SK-N-SH (cell line): ENCODE measurements at regions of chr1 and their contacts with region 1.

Region 1: DNA sequence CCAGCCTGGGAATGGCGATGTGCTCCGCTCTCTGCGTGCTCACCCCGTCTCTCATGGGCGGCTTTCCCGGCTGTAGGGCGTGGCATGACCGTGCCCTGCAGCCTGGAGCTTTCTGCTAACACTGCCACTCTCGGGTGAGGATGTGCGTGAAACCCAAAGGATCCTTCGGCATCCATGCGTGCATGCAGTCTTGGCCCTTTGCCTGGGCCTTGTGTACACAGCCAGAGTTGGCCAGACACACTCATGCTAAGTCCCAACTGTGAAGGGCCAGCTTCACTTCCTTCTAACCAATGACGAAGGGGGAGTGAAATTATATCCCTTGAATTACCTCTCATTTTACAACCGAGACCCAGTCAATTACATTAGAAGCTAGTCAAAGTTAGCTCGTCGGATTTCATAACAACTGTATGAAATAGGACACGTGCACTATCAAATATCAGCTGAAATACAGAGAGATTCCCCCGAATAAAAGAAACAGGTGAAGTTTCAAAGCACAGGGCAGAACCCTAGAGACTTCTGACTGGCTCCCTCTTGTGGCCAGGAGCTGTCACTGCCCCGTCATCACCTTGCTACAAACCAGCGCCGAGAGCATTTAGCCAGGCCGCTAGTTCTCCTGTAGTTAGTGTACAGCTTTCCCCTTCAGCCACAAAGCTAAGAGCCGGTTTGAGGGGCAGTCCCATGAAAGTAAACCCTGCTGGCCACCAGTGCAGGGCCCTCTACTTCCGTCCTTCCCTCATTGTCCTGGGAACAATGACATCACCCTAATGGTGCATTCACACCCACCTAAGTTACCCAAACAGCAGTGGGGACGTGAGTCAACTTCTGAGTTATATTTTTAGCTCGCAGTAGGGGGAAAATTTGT is 63.4 kb upstream of the COA6 start:
- DNase-seq: peak; percentile 78
- H3K4me3 ChIP-seq: no peak overlapping the region; a peak in 1 of 4 replicates
- H3K27ac ChIP-seq: no peak overlapping the region; a peak in 1 of 4 replicates
- H3K4me1 ChIP-seq: peaks cover 0 to 13% of the 10 kb centered on the region in 2 experiments; a peak in 2 of 4 replicates
- H3K27me3 ChIP-seq: no peaks in the 10 kb centered on the region
- CTCF ChIP-seq: peak; percentile 98
- EP300 ChIP-seq: no peak
- RAD21 ChIP-seq: peak; percentile 81

Region 2: DNA sequence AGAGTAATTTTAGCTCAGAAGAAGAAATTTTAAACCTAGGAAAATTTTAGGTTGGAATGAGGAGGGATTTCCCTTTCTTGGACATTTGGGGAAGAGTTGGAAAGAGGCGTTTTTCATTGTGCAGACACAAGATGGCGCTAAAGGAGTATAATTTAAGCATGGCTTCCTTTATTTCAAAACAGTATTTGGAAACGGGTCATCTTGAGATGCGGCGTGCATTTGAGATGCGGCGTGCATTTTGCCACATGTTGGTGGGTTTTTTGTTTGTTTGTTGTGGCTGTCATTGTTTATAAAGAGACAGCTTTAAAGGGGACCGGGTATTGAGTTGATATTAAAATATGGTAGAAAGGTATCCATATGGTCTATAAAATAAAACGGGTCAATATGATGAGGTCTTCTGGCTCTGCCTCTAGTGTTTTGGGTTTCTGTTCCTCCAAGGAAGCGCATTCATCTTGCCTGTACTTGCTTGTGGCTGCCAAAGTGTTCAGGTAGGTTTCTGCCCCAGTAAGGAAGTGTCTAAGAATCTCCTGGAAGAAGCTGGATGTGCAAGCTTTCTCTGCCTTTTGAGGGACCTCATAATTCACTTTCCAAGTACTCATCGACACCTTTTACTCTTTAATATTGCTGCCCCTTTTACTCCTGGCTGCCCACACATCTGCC is 195.1 kb before region 1 on chr1:
- CTCF ChIA-PET with region 1: interaction called, 33 read pairs
- POLR2A ChIA-PET with region 1: no interaction called
- DNase-seq: peak; percentile 54
- H3K4me3 ChIP-seq: peak overlapping the region; percentile 7 to 44; a peak in 3 of 4 replicates
- H3K27ac ChIP-seq: no peak overlapping the region
- H3K4me1 ChIP-seq: peaks cover 0 to 5% of the 10 kb centered on the region in 2 experiments; a peak in 2 of 4 replicates
- H3K27me3 ChIP-seq: no peaks in the 10 kb centered on the region
- CTCF ChIP-seq: peak; percentile 84
- EP300 ChIP-seq: no peak
- RAD21 ChIP-seq: peak; percentile 87

Region 3: DNA sequence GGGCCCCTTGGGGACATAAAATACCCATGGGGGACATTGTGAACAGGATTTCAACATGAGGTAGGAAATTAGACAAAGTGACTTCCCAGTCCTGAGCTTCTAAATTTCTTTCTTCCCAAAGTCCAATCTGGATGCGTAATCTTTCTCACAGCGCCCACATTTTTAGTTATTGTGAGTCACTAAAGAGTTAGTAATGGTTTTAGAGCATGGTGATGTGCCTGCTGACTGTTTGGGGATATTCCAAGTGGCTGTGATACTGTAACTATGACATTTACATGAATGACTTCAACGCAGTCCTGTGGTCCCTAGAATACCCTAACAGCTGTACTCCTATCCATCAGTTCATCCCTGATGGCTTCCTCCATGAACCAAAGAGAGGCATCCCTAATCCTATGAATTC is 160.6 kb before region 1 on chr1:
- CTCF ChIA-PET with region 1: interaction called, 16 read pairs
- POLR2A ChIA-PET with region 1: no interaction called
- DNase-seq: no peak
- H3K4me3 ChIP-seq: no peak overlapping the region
- H3K27ac ChIP-seq: peak overlapping the region in 1 of 2 experiments; percentile 71; a peak in 2 of 4 replicates
- H3K4me1 ChIP-seq: peaks cover 0 to 5% of the 10 kb centered on the region in 2 experiments; a peak in 2 of 4 replicates
- H3K27me3 ChIP-seq: no peaks in the 10 kb centered on the region
- CTCF ChIP-seq: no peak
- EP300 ChIP-seq: no peak
- RAD21 ChIP-seq: no peak

Region 4: DNA sequence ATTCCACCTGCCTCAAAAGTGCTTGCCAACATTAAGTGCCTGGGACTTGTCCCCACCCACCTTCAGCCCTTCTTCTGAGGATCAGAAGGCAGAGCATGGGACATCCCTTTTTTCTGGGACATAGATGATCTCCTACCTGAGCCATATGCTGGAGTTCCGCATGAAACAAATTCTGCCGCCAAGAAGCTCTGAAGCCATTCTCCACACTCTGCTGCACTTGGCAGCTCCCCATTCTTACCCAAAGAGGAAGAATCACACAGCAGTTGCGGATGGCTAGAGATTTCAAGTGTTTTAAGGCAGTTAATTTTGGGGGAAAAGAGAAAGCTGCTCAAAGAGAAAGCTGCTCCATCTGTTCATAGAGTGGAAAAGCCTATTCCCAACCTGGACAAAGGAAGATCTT is 133.8 kb before region 1 on chr1:
- CTCF ChIA-PET with region 1: interaction called, 11 read pairs
- POLR2A ChIA-PET with region 1: no interaction called
- DNase-seq: no peak
- H3K4me3 ChIP-seq: no peak overlapping the region
- H3K27ac ChIP-seq: no peak overlapping the region
- H3K4me1 ChIP-seq: no peaks in the 10 kb centered on the region
- H3K27me3 ChIP-seq: peaks cover 5% of the 10 kb centered on the region; the same call in 1 of the 2 replicates
- CTCF ChIP-seq: no peak
- EP300 ChIP-seq: no peak
- RAD21 ChIP-seq: no peak

Region 5: DNA sequence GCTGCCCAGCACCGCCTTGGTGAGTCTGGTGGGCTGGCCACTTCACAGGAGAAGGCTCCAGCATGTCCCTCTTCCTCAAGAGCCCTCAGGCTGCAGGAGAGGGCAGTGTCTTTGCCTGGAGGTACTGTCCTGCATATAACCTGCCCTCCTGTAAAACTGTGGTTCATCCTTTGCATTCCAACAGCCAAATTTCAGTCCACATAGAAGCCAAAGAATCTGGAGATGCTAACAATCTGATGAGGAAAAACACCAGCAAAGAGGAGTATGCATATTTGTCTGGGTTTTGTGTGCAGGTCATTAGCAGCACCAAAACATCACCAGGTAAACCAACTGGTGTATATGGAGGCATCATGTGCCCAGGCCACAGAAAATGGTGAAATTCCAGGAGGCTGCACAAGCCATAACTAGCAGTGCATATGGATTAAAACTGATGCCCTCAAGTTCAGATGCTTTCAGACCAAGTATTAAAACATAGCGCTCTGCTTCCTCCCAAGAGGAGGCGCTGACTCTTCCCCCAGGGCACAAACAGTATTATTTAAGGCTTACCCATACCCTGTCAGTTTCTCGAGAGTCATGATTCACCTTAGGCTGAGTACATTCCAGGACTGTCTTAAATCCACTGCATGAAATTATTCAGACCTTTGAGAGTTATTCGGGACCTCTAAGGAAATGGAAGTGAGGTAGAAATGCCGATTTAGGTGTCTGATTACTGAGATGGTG is 87.1 kb before region 1 on chr1:
- CTCF ChIA-PET with region 1: interaction called, 190 read pairs
- POLR2A ChIA-PET with region 1: no interaction called
- DNase-seq: no peak
- H3K4me3 ChIP-seq: no peak overlapping the region
- H3K27ac ChIP-seq: no peak overlapping the region
- H3K4me1 ChIP-seq: no peaks in the 10 kb centered on the region
- H3K27me3 ChIP-seq: no peaks in the 10 kb centered on the region
- CTCF ChIP-seq: no peak
- EP300 ChIP-seq: no peak
- RAD21 ChIP-seq: no peak

Region 6: DNA sequence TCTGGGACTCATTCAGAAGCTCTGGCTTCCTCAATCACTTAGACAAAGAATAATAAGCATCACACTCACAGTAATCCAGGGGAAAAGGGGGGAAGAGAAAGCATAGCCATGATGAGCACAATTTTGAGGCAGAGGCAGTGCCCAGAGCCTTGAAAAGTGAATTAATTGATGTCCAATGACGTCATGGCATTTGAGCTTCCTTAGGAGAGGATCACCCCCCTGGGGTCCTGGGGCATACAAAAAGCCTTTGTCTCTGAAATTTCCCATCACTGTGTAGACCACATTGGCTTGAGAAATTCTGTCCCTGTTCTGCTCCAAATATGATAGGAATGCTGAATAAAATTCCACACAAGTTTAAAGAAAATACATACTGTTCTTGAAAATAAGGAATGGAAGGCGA is 20.9 kb before region 1 on chr1:
- CTCF ChIA-PET with region 1: interaction called, 64 read pairs
- POLR2A ChIA-PET with region 1: no interaction called
- DNase-seq: no peak
- H3K4me3 ChIP-seq: no peak overlapping the region
- H3K27ac ChIP-seq: no peak overlapping the region
- H3K4me1 ChIP-seq: no peaks in the 10 kb centered on the region
- H3K27me3 ChIP-seq: no peaks in the 10 kb centered on the region
- CTCF ChIP-seq: no peak
- EP300 ChIP-seq: no peak
- RAD21 ChIP-seq: no peak

Region 7: DNA sequence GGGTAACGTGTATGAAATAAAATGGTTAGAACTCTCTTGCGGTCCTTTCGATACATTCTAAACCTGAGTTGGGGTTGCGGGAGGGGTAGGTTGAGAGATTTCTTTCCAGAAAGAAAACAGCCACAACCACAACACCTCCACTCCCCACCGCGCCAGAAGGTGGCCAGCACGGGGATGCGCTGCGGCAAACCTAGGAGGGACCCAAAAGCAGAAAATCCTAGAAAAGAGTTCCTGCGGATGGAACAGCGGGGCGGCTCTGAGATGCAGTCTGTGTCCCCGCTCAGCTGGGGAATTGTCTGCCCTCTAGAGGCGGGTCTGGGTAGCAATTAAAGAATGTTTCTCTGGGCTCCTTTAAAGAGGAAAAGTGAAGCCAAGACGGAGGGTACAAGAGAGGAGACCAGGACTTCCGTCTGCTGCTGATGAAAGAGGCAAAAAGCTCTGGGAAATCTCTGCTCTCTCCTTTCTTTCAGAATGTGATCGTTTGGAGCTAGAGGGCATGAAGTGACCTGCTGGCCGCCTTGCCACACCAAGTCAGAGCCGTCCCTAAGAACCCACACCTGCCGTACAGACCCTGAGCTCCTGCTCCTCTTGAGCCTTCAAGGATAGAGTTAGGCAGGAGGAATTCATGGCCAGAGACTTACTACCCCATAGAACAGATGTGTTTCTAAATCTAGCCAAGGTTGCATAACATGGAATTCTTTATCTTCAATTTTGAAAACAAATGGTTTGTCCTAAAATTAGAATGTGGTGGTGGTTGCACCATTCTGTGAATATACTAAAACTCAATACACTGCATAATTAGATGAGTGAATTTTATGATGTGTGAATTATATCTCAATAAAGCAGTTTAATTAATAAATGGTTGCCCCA is 16.9 kb after region 1 on chr1:
- CTCF ChIA-PET with region 1: interaction called, 102 read pairs
- POLR2A ChIA-PET with region 1: no interaction called
- DNase-seq: peak; percentile 72
- H3K4me3 ChIP-seq: no peak overlapping the region; a peak in 1 of 4 replicates
- H3K27ac ChIP-seq: no peak overlapping the region
- H3K4me1 ChIP-seq: peaks cover 0 to 7% of the 10 kb centered on the region in 2 experiments; a peak in 1 of 4 replicates
- H3K27me3 ChIP-seq: no peaks in the 10 kb centered on the region
- CTCF ChIP-seq: peak; percentile 76
- EP300 ChIP-seq: no peak
- RAD21 ChIP-seq: peak; percentile 69

Region 8: DNA sequence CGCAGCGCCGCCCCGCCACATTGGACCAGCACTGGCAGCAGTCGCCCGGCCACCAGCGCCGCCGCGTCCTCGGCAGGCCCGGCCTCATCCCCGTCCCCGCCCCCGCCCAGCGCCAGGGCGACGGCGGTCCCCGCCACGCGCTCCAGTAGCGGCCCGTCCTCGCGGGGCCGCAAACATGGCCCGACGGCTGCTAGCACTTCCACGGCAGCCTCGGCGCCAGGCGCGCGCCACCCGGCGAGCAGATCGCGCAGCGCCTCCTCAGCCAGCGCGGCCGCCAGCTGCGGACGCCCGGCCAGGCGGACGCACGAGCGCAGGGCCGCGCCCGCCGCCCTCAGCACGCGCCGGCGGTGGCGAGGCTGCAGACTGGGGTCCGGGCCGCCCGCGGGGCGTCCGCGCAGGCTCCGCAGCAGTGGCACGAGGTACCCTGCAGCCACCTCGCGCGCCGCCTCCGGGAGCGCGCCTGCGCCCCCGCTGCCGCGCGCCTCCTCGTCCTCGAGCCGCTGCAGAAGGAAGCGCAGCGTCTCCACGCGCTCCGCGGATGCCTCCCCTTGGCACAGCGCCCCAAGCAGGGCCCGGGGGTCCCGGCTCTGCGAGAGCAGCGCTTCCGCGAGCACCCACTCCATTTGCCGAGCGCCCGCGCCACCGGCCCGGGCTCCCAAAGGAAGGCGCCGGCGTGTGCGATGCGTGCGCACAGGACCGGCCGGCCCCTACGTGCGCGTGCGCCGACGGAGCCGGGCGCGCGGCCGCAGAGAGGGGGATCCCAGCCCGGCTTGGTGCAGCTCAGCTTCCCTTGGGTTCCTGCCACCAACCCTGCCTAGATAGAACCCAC is 168.9 kb after region 1 on chr1 and contains the start of gene TARBP1:
- CTCF ChIA-PET with region 1: no interaction called
- POLR2A ChIA-PET with region 1: no interaction called
- DNase-seq: peak; percentile 96
- H3K4me3 ChIP-seq: peak within 1 kb of the TSS; percentile 73 to 78
- H3K27ac ChIP-seq: peak within 1 kb of the TSS; percentile 22 to 91; a peak in 3 of 4 replicates
- H3K4me1 ChIP-seq: peaks cover 4 to 17% of the 10 kb centered on the region in 2 experiments; a peak in 3 of 4 replicates
- H3K27me3 ChIP-seq: no peaks in the 10 kb centered on the region
- CTCF ChIP-seq: no peak
- EP300 ChIP-seq: no peak
- RAD21 ChIP-seq: no peak; the same call in 1 of the 2 replicates
- polyA plus RNA-seq, gene TARBP1: 33.0 and 46.1 TPM in 2 replicates